K562 (cell line): ENCODE measurements at regions of chr17 and their contacts with region 1.

Region 1: GRCh38 chr17:46144246-46144645 is 49.0 kb downstream of the KANSL1 start:
- DNase-seq: no peak
- ATAC-seq: no peak
- H3K4me3 ChIP-seq: no peak overlapping the region
- H3K27ac ChIP-seq: no peak overlapping the region
- H3K4me1 ChIP-seq: peaks cover 11 to 12% of the 10 kb centered on the region in 2 experiments; a peak in 4 of 5 replicates
- H3K27me3 ChIP-seq: no peaks in the 10 kb centered on the region
- CTCF ChIP-seq: no peak
- EP300 ChIP-seq: no peak
- POLR2A ChIP-seq: no peak
- RAD21 ChIP-seq: no peak

Region 2: DNA sequence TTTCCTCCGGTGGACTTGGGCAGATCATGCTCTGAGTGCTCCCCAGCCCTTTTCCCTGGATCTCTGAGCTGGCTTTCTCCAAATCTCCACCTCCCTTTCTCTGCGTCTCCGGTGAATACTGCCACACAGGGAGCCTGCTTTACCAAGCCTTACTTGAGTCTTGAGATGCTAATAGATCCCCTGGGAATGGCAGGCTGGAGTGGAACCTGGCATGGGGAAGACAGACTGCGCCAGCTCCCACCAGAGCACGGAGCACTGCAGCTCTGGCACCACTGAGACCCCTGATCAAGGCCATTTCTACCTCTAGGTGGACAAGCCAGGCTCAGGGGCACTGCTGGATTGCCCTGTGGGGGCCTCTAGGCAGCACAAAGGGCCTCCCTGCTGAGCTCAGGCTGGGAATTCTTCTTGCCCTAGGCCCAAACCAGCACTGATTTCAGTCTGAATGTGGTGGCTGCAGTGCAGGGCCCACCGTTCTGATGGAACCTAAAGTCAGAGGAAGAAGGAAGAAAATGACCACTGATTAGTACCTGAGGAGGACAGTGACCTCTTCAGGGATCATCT is 434.4 kb before region 1 on chr17:
- CTCF ChIA-PET with region 1: no interaction called
- POLR2A ChIA-PET with region 1: no interaction called
- in situ Hi-C with region 1: no loop called
- intact Hi-C with region 1: no loop called
- DNase-seq: no peak
- ATAC-seq: no peak
- H3K4me3 ChIP-seq: no peak overlapping the region
- H3K27ac ChIP-seq: no peak overlapping the region
- H3K4me1 ChIP-seq: no peaks in the 10 kb centered on the region; a peak in 1 of 5 replicates
- H3K27me3 ChIP-seq: peaks cover 6 to 45% of the 10 kb centered on the region in 2 experiments
- CTCF ChIP-seq: no peak
- EP300 ChIP-seq: no peak
- POLR2A ChIP-seq: no peak
- RAD21 ChIP-seq: no peak

Region 3: GRCh38 chr17:46044286-46044928 is 99.8 kb before region 1 on chr17:
- CTCF ChIA-PET with region 1: no interaction called
- POLR2A ChIA-PET with region 1: no interaction called
- in situ Hi-C with region 1: no loop called
- intact Hi-C with region 1: no loop called
- DNase-seq: peak; percentile 52 to 83 (median 60)
- ATAC-seq: peak; percentile 93
- H3K4me3 ChIP-seq: no peak overlapping the region
- H3K27ac ChIP-seq: no peak overlapping the region
- H3K4me1 ChIP-seq: peaks cover 0 to 5% of the 10 kb centered on the region in 2 experiments; a peak in 2 of 5 replicates
- H3K27me3 ChIP-seq: no peaks in the 10 kb centered on the region
- CTCF ChIP-seq: peak; percentile 92 to 98 (median 98)
- EP300 ChIP-seq: no peak
- POLR2A ChIP-seq: no peak
- RAD21 ChIP-seq: peak; percentile 78

Region 4: GRCh38 chr17:46121841-46122485 is 22.3 kb before region 1 on chr17:
- CTCF ChIA-PET with region 1: no interaction called
- POLR2A ChIA-PET with region 1: interaction called, 29 read pairs
- in situ Hi-C with region 1: no loop called
- intact Hi-C with region 1: no loop called
- DNase-seq: no peak
- ATAC-seq: no peak
- H3K4me3 ChIP-seq: no peak overlapping the region
- H3K27ac ChIP-seq: no peak overlapping the region
- H3K4me1 ChIP-seq: peaks cover 0 to 23% of the 10 kb centered on the region in 2 experiments; a peak in 3 of 5 replicates
- H3K27me3 ChIP-seq: no peaks in the 10 kb centered on the region
- CTCF ChIP-seq: no peak
- EP300 ChIP-seq: no peak
- POLR2A ChIP-seq: no peak
- RAD21 ChIP-seq: no peak

Region 5: DNA sequence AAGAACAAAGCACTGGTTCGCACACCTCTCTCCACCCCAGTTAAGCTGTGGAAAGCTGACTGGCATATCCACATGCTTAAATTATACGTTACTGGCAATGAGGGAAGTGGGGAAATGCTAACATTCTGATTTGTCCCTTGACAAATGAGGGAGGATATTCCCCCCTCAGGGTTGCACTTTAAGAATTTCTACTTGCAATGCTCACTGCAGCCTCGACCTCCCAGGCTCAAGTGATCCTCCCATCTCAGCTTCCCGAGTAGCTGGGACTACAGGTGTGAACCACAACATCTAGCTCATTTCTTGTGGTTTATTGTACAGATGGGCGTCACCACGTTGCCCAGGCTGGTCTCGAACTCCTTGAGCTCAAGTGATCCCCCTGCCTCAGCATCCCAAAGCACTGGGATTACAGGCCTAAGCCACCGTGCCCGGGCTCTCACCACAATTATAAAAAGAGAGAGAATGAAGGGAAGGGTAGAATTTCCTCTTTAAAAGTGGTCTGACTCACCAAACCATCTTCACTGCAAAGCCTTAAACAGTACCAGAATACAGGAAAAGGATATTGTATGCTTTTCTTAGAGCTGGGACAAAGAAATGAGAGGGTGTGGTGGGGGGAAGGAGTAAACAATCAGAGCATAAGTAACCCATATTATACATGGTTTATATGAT is 10.0 kb after region 1 on chr17:
- CTCF ChIA-PET with region 1: no interaction called
- POLR2A ChIA-PET with region 1: interaction called, 25 read pairs
- in situ Hi-C with region 1: no loop called
- intact Hi-C with region 1: no loop called
- DNase-seq: no peak
- ATAC-seq: peak; percentile 4; the same call in 1 of the 3 replicates
- H3K4me3 ChIP-seq: no peak overlapping the region
- H3K27ac ChIP-seq: no peak overlapping the region
- H3K4me1 ChIP-seq: peaks cover 7 to 49% of the 10 kb centered on the region in 2 experiments; a peak in 4 of 5 replicates
- H3K27me3 ChIP-seq: no peaks in the 10 kb centered on the region
- CTCF ChIP-seq: no peak
- EP300 ChIP-seq: no peak
- POLR2A ChIP-seq: no peak
- RAD21 ChIP-seq: no peak

Region 6: GRCh38 chr17:46159686-46160085 is 15.4 kb after region 1 on chr17:
- CTCF ChIA-PET with region 1: no interaction called
- POLR2A ChIA-PET with region 1: interaction called, 25 read pairs
- in situ Hi-C with region 1: no loop called
- intact Hi-C with region 1: no loop called
- DNase-seq: peak in 2 of 4 experiments; percentile 43 to 46
- ATAC-seq: peak; percentile 59
- H3K4me3 ChIP-seq: no peak overlapping the region
- H3K27ac ChIP-seq: no peak overlapping the region
- H3K4me1 ChIP-seq: peaks cover 0 to 26% of the 10 kb centered on the region in 2 experiments; a peak in 3 of 5 replicates
- H3K27me3 ChIP-seq: no peaks in the 10 kb centered on the region
- CTCF ChIP-seq: no peak
- EP300 ChIP-seq: no peak
- POLR2A ChIP-seq: no peak
- RAD21 ChIP-seq: no peak

Region 7: DNA sequence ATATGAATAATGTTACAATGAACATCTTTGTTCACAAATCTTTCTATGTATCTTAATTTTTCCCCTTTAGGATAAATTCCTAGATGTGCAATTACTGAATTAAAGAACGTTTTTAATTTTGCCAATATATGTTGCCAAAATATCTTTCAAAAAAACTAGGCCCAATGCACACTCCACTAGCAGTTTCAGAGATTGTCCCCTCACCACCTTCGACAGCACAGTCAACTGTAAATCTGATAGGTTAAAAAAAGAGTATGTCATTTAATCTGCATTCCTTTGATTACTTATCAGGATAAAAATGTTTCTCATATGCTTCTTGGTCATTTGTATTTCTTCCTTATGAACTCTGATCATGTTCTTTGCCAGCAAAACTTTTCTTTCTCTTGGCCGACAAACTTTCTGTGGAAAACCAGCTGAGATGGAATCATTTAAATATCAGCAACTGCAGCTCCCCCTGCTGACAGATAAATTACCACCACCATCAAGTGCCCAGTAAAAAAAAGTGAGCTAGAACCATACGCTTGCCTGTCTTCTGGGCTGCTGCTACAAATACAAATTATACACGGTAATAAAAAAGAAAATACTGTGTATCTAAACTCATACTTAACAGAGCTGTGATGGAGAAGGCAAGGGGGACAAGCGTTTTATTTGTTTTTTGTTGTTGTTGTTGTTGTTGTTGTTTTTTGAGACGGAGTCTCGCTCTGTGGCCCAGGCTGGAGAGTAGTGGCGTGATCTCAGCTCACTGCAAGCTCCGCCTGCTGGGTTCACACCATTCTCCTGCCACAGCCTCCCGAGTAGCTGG is 68.6 kb after region 1 on chr17:
- CTCF ChIA-PET with region 1: no interaction called
- POLR2A ChIA-PET with region 1: no interaction called
- in situ Hi-C with region 1: no loop called
- intact Hi-C with region 1: no loop called
- DNase-seq: peak; percentile 64 to 82 (median 68)
- ATAC-seq: peak; percentile 93
- H3K4me3 ChIP-seq: no peak overlapping the region
- H3K27ac ChIP-seq: no peak overlapping the region
- H3K4me1 ChIP-seq: peaks cover 0 to 4% of the 10 kb centered on the region in 2 experiments; a peak in 1 of 5 replicates
- H3K27me3 ChIP-seq: no peaks in the 10 kb centered on the region
- CTCF ChIP-seq: peak; percentile 85 to 96 (median 88)
- EP300 ChIP-seq: no peak
- POLR2A ChIP-seq: no peak
- RAD21 ChIP-seq: peak; percentile 88 to 89